ENCODE measurements at regions of chr1 and their contacts with region 1.

Region 1: DNA sequence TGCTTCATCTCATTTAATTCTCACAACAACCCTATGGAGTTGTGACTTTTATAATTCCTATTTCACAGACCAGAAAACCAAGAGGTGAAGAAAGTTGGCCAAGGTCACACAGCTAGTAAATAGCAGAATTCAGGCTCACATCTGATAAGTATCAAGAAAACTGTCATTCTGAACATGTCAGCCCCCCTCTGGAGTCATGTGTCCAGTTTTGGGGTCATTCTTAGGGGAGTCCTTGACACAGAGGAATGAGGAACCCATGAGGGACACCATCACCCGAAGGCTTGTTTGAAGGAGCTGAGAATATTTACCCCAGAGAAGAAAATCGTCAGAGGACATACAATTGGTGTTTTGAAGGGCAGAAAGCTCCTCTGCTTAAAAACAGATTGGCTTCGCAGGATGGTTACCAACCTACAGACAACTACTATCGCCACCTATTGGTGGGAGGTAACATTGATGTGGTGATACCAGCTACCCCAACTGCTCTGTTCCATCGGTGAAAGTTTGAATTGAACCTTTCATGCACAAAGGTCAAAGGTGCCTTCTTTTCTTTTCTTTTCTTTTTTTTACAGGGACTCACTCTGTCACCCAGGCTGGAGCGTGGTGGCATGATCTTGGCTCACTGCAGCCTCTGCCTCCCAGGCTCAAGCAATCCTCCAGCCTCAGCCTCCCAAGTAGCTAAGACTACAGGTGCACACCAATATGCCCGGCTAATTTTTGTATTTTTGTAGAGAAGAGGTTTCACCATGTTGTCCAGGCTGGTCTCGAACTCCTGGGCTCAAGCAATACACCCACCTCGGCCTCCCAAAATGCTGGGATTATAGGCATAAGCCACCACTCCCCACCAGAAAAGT is 31.3 kb downstream of the NCMAP start:
- DNase-seq: peak; percentile 70
- ATAC-seq: peak; percentile 98
- H3K4me3 Mint-ChIP-seq: no peak overlapping the region
- H3K27ac Mint-ChIP-seq: peak overlapping the region; percentile 78
- H3K4me1 Mint-ChIP-seq: peaks cover 8% of the 10 kb centered on the region
- H3K27me3 Mint-ChIP-seq: no peaks in the 10 kb centered on the region
- CTCF ChIP-seq: peak; percentile 71

Region 2: GRCh38 chr1:24385160-24385940 is 201.8 kb before region 1 on chr1:
- CTCF ChIA-PET with region 1: interaction called, 54 read pairs
- POLR2A ChIA-PET with region 1: no interaction called
- intact Hi-C with region 1: no loop called
- DNase-seq: peak; percentile 61
- ATAC-seq: peak; percentile 57
- H3K4me3 Mint-ChIP-seq: no peak overlapping the region
- H3K27ac Mint-ChIP-seq: peak overlapping the region; percentile 14
- H3K4me1 Mint-ChIP-seq: peaks cover 28% of the 10 kb centered on the region
- H3K27me3 Mint-ChIP-seq: no peaks in the 10 kb centered on the region
- CTCF ChIP-seq: peak; percentile 74

Region 3: DNA sequence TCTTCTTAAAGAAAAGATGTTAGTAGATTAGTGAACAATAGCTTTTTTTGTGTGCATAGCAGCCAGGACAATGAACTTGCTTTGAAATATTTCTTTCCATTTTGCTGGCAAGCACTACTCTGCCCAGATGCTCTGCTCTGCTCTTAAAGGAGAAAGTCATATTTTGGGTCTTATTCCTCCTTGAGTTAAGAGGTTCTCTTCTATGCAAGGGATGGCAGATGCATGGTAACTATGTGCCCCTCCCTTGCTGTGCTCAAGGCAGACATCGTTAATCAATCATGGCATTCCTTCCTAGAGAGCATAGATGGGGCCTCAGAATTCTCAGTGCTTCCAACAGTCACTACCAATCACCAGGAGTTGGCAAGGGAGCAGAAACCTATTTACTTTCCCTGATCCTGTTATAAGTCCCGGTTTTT is 143.9 kb before region 1 on chr1:
- CTCF ChIA-PET with region 1: interaction called, 19 read pairs
- POLR2A ChIA-PET with region 1: no interaction called
- intact Hi-C with region 1: no loop called
- DNase-seq: no peak
- ATAC-seq: no peak
- H3K4me3 Mint-ChIP-seq: no peak overlapping the region
- H3K27ac Mint-ChIP-seq: no peak overlapping the region
- H3K4me1 Mint-ChIP-seq: peaks cover 3% of the 10 kb centered on the region
- H3K27me3 Mint-ChIP-seq: no peaks in the 10 kb centered on the region
- CTCF ChIP-seq: no peak

Region 4: DNA sequence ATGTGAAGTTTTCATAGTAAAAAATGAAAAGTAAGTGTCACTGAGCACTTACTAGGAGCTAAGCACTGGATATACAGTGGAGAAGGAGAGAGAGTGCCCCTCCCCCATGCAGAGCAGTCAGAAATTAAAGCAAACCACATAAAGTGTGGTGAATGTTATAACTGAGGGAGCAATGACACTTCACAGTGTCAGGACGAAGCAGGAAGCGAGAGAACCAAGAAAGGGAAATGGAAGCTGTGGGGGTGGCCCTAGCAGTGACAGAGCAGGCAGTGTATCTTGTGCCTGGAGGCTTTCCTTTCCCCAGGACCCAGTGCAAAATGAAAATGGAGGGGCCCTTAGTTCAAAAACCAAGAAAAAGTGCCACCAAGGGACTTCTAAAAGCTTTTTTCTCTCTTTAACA is 106.1 kb before region 1 on chr1:
- CTCF ChIA-PET with region 1: interaction called, 14 read pairs
- POLR2A ChIA-PET with region 1: interaction called, 3 read pairs
- intact Hi-C with region 1: no loop called
- DNase-seq: peak; percentile 80
- ATAC-seq: peak; percentile 75
- H3K4me3 Mint-ChIP-seq: peak overlapping the region; percentile 59
- H3K27ac Mint-ChIP-seq: peak overlapping the region; percentile 97
- H3K4me1 Mint-ChIP-seq: peaks cover 58% of the 10 kb centered on the region
- H3K27me3 Mint-ChIP-seq: no peaks in the 10 kb centered on the region
- CTCF ChIP-seq: no peak

Region 5: DNA sequence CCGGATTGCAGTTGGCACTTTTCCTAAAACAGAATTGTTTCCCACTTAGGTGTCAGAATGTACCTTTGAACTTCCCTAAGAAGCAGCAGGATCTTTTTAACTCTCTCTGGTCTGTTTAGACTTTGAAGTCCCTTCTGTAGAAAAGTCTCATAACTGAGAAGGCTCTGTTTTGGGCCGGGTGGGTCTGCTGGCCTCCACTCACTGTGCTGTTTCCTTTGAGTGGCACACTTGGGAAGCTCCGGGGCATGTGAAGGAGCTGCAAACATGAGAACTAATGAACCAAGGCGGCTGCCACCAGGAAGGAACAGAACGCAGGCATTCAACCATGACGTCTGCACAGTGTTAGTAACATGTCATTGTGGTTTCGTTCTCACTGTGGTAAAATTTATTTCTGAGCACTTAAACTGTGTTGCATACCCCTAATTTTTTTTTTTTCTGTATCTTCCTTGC is 50.8 kb before region 1 on chr1:
- CTCF ChIA-PET with region 1: interaction called, 27 read pairs
- POLR2A ChIA-PET with region 1: no interaction called
- intact Hi-C with region 1: loop called (anchors 5 kb)
- DNase-seq: peak; percentile 84
- ATAC-seq: peak; percentile 61
- H3K4me3 Mint-ChIP-seq: peak overlapping the region; percentile 72
- H3K27ac Mint-ChIP-seq: peak overlapping the region; percentile 98
- H3K4me1 Mint-ChIP-seq: peaks cover 71% of the 10 kb centered on the region
- H3K27me3 Mint-ChIP-seq: no peaks in the 10 kb centered on the region
- CTCF ChIP-seq: no peak

Region 6: GRCh38 chr1:24562625-24563024 is 24.6 kb before region 1 on chr1:
- CTCF ChIA-PET with region 1: interaction called, 18 read pairs
- POLR2A ChIA-PET with region 1: interaction called, 3 read pairs
- intact Hi-C with region 1: no loop called
- DNase-seq: no peak
- ATAC-seq: no peak
- H3K4me3 Mint-ChIP-seq: no peak overlapping the region
- H3K27ac Mint-ChIP-seq: no peak overlapping the region
- H3K4me1 Mint-ChIP-seq: peaks cover 6% of the 10 kb centered on the region
- H3K27me3 Mint-ChIP-seq: peaks cover 5% of the 10 kb centered on the region
- CTCF ChIP-seq: no peak

Region 7: GRCh38 chr1:24575915-24576587 is 11.1 kb before region 1 on chr1:
- CTCF ChIA-PET with region 1: interaction called, 17 read pairs
- POLR2A ChIA-PET with region 1: interaction called, 4 read pairs
- intact Hi-C with region 1: no loop called
- DNase-seq: no peak
- ATAC-seq: no peak
- H3K4me3 Mint-ChIP-seq: no peak overlapping the region
- H3K27ac Mint-ChIP-seq: no peak overlapping the region
- H3K4me1 Mint-ChIP-seq: peaks cover 13% of the 10 kb centered on the region
- H3K27me3 Mint-ChIP-seq: no peaks in the 10 kb centered on the region
- CTCF ChIP-seq: no peak

Region 8: GRCh38 chr1:24793447-24794131 is 206.4 kb after region 1 on chr1:
- CTCF ChIA-PET with region 1: no interaction called
- POLR2A ChIA-PET with region 1: no interaction called
- intact Hi-C with region 1: no loop called
- DNase-seq: no peak
- ATAC-seq: no peak
- H3K4me3 Mint-ChIP-seq: no peak overlapping the region
- H3K27ac Mint-ChIP-seq: no peak overlapping the region
- H3K4me1 Mint-ChIP-seq: no peaks in the 10 kb centered on the region
- H3K27me3 Mint-ChIP-seq: no peaks in the 10 kb centered on the region
- CTCF ChIP-seq: no peak

Measured in activated CD8-positive, alpha-beta T cell treated with anti-CD3 and anti-CD28 coated beads for 36 hours (primary cell).